ENCODE measurements at regions of chr3 and their contacts with region 1.

Region 1: GRCh38 chr3:48088749-48089466 is 72.7 kb upstream of the MAP4 start:
- DNase-seq: peak; percentile 95
- ATAC-seq: peak; percentile 92
- H3K4me3 Mint-ChIP-seq: peak overlapping the region; percentile 97
- H3K27ac Mint-ChIP-seq: peak overlapping the region; percentile 97
- H3K4me1 Mint-ChIP-seq: peaks cover 29% of the 10 kb centered on the region
- H3K27me3 Mint-ChIP-seq: no peaks in the 10 kb centered on the region
- CTCF ChIP-seq: no peak

Region 2: DNA sequence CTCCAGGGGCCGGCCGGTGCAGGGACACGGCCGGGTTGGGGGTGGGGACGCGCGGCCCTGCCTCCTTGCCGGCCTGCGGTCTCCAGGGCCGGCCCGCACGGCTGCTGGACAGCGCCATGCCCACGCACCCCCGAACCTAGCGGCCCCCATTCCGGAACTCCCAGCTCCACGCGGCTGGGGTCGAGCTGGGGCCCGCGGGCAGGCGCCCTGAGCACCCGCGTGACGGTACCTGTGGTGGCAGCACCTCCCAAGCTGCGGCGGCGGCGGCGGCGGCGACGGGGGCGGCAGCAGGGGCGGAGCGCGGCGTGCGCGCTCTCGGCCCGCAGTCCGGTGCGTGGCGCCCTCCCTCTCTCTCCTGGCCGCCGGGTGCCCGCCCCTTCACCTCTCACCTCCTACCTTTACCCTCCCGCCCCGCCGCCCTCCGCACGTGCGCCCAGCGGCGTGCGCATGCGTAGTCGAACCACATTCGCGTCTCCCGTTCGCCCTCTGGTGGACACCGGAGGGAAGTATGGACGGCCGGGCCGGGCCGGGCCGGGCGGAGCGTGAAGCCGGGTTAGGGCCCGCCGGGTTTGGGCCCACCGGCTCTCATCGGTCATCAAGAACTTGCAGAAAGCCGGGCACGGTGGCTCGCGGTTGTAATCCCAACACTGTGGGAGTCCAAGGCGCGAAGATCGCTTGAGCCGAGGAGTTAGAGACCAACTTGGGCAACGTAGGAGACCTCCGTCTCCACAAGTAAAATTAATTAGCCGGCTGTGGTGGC is 613.2 kb before region 1 on chr3 and contains the start of gene SCAP:
- CTCF ChIA-PET with region 1: no interaction called
- POLR2A ChIA-PET with region 1: no interaction called
- intact Hi-C with region 1: loop called (anchors 5 kb)
- DNase-seq: peak; percentile 95
- ATAC-seq: peak; percentile 95
- H3K4me3 Mint-ChIP-seq: peak within 1 kb of the TSS; percentile 91
- H3K27ac Mint-ChIP-seq: peak within 1 kb of the TSS; percentile 89
- H3K4me1 Mint-ChIP-seq: peaks cover 36% of the 10 kb centered on the region
- H3K27me3 Mint-ChIP-seq: no peaks in the 10 kb centered on the region
- CTCF ChIP-seq: peak; percentile 98
- total RNA-seq, gene SCAP: 82.5 and 84.3 TPM in 2 replicates

Region 3: DNA sequence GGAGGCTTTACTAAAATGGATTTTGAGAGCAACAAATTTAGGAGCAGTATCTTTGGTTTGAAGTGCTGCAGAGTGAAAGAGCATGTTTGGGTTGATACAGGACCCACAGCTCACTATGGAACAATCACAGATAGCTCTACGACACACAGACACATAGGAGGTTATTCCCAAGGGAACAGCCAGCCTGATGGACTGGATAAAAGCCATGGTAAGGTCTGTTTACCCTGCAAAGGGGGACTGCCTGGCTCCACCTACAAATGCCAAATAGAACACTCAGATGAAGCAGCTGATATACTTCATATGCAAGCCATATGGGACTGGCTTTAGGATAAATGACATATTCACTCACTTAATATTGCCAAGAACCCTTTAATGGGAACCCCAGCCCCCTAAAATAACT is 23.9 kb after region 1 on chr3:
- CTCF ChIA-PET with region 1: no interaction called
- POLR2A ChIA-PET with region 1: interaction called, 15 read pairs
- intact Hi-C with region 1: loop called (anchors 1 kb)
- DNase-seq: no peak
- ATAC-seq: no peak
- H3K4me3 Mint-ChIP-seq: peak overlapping the region; percentile 17
- H3K27ac Mint-ChIP-seq: peak overlapping the region; percentile 46
- H3K4me1 Mint-ChIP-seq: peaks cover 18% of the 10 kb centered on the region
- H3K27me3 Mint-ChIP-seq: no peaks in the 10 kb centered on the region
- CTCF ChIP-seq: no peak

Region 4: GRCh38 chr3:48188266-48189201 is 99.6 kb after region 1 on chr3 and contains the start of gene CDC25A:
- CTCF ChIA-PET with region 1: no interaction called
- POLR2A ChIA-PET with region 1: interaction called, 13 read pairs
- intact Hi-C with region 1: loop called (anchors 1 kb)
- DNase-seq: peak; percentile 79
- ATAC-seq: peak; percentile 99
- H3K4me3 Mint-ChIP-seq: peak within 1 kb of the TSS; percentile 88
- H3K27ac Mint-ChIP-seq: peak within 1 kb of the TSS; percentile 80
- H3K4me1 Mint-ChIP-seq: peaks cover 13% of the 10 kb centered on the region
- H3K27me3 Mint-ChIP-seq: peaks cover 9% of the 10 kb centered on the region
- CTCF ChIP-seq: no peak
- total RNA-seq, gene CDC25A: 1.7 and 1.8 TPM in 2 replicates

Region 5: DNA sequence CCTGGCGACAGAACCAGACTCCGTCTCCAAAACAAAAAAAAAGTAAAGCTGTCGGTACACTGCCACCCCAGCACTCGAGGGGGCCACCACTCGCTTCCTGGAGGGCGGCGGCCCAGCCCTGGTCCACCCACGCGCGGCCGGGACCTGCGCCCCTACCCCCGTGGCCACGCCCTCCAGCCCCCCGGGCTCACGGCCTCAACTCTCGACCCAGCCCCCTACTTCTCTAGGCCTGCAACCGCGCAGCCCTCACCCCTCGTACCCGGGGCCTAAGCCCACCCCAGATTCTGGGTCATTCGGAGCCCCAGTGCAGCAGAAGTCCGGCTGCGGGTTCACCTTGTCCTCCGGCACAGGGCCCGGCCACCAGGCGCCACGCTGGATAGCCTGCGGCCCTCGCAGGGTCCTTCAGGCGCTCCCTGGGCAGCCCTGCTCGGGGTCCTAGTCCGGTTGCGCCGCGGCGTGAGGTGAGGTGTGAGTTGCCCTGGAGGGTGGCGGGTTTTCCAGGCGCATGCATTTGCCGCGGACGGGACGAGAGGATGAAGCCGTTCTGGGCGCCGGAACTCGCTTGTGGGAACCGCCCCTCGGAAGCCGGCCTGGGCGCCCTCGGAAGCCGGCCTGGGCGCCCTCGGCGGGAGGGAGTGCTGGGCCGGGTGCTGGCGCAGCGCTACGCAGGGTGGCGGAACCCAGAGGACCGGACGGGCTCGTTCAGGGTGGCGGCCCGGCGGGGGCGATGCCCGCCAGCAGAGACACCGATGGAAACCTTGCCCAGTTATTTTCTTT is 212.3 kb after region 1 on chr3:
- CTCF ChIA-PET with region 1: no interaction called
- POLR2A ChIA-PET with region 1: no interaction called
- intact Hi-C with region 1: loop called (anchors 1 kb)
- DNase-seq: peak; percentile 95
- ATAC-seq: peak; percentile 91
- H3K4me3 Mint-ChIP-seq: peak within 1 kb of the TSS; percentile 97
- H3K27ac Mint-ChIP-seq: peak within 1 kb of the TSS; percentile 98
- H3K4me1 Mint-ChIP-seq: peaks cover 42% of the 10 kb centered on the region
- H3K27me3 Mint-ChIP-seq: no peaks in the 10 kb centered on the region
- CTCF ChIP-seq: no peak